ENCODE measurements at regions of chr3 and their contacts with region 1.

Region 1: GRCh38 chr3:150079029-150079739 is 108.5 kb upstream of the PFN2 start:
- DNase-seq: no peak
- ATAC-seq: peak; percentile 25
- H3K4me3 ChIP-seq: no peak overlapping the region
- H3K27ac ChIP-seq: peak overlapping the region; percentile 80
- H3K4me1 ChIP-seq: peaks cover 56% of the 10 kb centered on the region
- H3K27me3 ChIP-seq: no peaks in the 10 kb centered on the region
- CTCF ChIP-seq: no peak

Region 2: DNA sequence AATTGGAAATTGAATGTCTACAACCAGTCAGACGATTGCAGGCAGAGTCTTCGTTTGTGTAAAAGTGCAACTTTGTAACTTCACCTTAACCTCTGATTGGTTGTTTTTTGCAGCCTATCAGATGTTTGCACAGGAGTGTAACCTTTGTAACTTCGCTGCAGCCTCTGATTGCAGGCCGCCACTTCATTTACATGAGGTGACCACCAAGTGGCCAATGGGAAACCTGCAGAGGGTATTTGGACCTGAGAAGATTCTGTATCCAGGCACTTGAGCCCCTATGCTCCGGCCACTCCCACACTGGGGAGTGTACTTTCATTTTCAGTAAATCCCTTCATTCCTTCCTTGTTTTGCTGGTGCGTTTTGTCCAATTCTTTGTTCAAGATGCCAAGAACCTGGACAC is 40.4 kb before region 1 on chr3:
- CTCF ChIA-PET with region 1: no interaction called
- POLR2A ChIA-PET with region 1: no interaction called
- in situ Hi-C with region 1: no loop called
- intact Hi-C with region 1: no loop called
- DNase-seq: no peak
- ATAC-seq: peak; percentile 56; the same call in 1 of the 2 replicates
- H3K4me3 ChIP-seq: no peak overlapping the region
- H3K27ac ChIP-seq: no peak overlapping the region
- H3K4me1 ChIP-seq: no peaks in the 10 kb centered on the region
- H3K27me3 ChIP-seq: no peaks in the 10 kb centered on the region
- CTCF ChIP-seq: no peak

Region 3: DNA sequence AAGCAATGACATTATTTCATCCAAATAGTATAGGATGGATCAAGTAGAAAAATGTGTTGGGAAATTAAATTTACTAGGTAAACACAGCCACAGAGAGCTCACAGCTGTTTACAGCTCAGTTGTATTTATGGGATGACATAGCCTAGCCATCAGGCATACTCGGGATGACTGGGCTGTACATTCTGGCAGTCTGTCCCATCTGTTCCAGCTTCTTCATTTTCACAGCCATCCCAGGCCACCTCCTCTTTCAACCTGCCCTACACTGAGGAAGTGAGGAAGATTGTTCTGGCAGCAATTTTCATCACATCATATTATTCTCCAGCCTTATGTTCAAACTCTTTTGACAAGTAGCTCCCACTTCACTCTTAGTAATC is 10.0 kb before region 1 on chr3:
- CTCF ChIA-PET with region 1: no interaction called
- POLR2A ChIA-PET with region 1: interaction called, 11 read pairs
- in situ Hi-C with region 1: no loop called
- intact Hi-C with region 1: no loop called
- DNase-seq: no peak
- ATAC-seq: no peak
- H3K4me3 ChIP-seq: no peak overlapping the region
- H3K27ac ChIP-seq: no peak overlapping the region; the same call in 1 of the 2 replicates
- H3K4me1 ChIP-seq: peaks cover 12% of the 10 kb centered on the region
- H3K27me3 ChIP-seq: no peaks in the 10 kb centered on the region
- CTCF ChIP-seq: no peak